Mammary epithelial cell (primary cell): ENCODE measurements at regions of chr20 and their contacts with region 1.

Region 1: GRCh38 chr20:43456809-43457639 is 672 bp upstream of the SRSF6 start:
- DNase-seq: peak; percentile 88
- H3K4me3 ChIP-seq: peak overlapping the region; percentile 68 to 98 (median 71)
- H3K27ac ChIP-seq: peak overlapping the region; percentile 96
- H3K4me1 ChIP-seq: peaks cover 12% of the 10 kb centered on the region
- H3K27me3 ChIP-seq: no peaks in the 10 kb centered on the region
- CTCF ChIP-seq: no peak

Region 2: DNA sequence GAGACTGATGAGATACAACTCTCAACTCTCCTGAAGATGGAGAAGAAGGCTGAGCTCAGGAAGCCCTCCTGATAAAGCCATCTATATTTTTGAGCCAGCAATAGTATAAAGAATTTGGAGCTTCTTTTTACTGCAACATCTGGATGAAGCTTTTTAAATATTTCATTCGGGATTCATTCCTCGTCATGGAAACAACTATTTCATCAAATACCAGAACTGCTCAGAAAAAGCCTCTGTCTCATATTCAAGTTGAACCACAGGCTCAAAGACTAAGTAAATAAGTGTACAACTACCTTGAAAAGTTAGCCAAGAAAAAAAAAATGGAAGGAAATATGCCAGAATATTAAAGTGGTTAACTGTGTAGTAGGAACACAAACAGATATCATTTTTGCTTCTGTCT is 305.1 kb before region 1 on chr20:
- CTCF ChIA-PET with region 1: no interaction called
- dilution Hi-C with region 1: no loop called
- in situ Hi-C with region 1: no loop called
- intact Hi-C with region 1: no loop called
- DNase-seq: no peak
- H3K4me3 ChIP-seq: no peak overlapping the region
- H3K27ac ChIP-seq: no peak overlapping the region
- H3K4me1 ChIP-seq: no peaks in the 10 kb centered on the region
- H3K27me3 ChIP-seq: no peaks in the 10 kb centered on the region
- CTCF ChIP-seq: no peak

Region 3: GRCh38 chr20:43492101-43492500 is 35.1 kb after region 1 on chr20:
- CTCF ChIA-PET with region 1: no interaction called
- dilution Hi-C with region 1: no loop called
- in situ Hi-C with region 1: no loop called
- intact Hi-C with region 1: loop called (anchors 2 kb)
- DNase-seq: peak; percentile 97
- H3K4me3 ChIP-seq: no peak overlapping the region
- H3K27ac ChIP-seq: peak overlapping the region; percentile 10
- H3K4me1 ChIP-seq: peaks cover 4% of the 10 kb centered on the region
- H3K27me3 ChIP-seq: no peaks in the 10 kb centered on the region
- CTCF ChIP-seq: no peak

Region 4: GRCh38 chr20:43590392-43591323 is 133.6 kb after region 1 on chr20 and contains the start of gene IFT52:
- CTCF ChIA-PET with region 1: no interaction called
- dilution Hi-C with region 1: no loop called
- in situ Hi-C with region 1: no loop called
- intact Hi-C with region 1: loop called (anchors 2 kb)
- DNase-seq: peak; percentile 93
- H3K4me3 ChIP-seq: peak within 1 kb of the TSS; percentile 96 to 98 (median 97)
- H3K27ac ChIP-seq: peak within 1 kb of the TSS; percentile 89
- H3K4me1 ChIP-seq: peaks cover 5% of the 10 kb centered on the region
- H3K27me3 ChIP-seq: no peaks in the 10 kb centered on the region
- CTCF ChIP-seq: no peak
- total RNA-seq, gene IFT52: 21.5 to 31.2 TPM

Region 5: DNA sequence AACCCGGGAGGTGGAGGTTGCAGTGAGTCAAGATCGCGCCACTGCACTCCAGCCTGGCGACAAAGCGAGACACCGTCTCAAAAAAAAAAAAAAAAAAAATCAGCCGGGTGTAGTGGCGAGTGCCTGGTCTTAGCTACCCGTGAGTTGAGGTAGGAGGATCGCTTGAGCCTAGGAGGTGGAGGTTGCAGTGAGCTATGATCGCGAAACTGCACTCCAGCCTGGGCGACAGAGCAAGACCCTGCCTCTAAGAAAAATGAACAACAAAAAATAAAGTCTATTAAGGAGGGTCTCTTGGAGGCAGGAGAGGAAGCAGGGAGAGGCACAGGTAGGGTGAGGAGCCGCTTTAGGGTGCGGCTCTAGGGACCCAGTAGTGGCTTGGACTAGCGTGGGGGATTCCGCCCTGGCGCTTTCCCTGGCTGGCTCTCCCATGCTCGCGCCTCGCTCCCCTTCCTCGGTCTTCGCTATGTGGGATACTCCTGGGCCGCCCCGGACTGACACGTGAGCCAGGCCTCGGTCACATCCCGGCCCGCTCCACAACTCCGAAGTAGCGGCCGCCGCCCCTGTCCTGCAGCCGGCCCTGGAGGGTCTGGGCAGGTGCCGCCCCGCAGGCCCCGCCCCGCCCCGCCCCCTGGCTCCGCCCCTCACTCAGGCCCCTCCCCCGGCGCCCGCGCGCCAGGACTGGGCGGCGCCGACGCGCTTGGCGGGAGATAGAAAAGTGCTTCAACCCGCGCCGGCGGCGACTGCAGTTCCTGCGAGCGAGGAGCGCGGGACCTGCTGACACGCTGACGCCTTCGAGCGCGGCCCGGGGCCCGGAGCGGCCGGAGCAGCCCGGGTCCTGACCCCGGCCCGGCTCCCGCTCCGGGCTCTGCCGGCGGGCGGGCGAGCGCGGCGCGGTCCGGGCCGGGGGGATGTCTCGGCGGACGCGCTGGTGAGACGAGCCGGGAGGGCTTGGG is 209.6 kb after region 1 on chr20 and contains the start of gene MYBL2:
- CTCF ChIA-PET with region 1: no interaction called
- dilution Hi-C with region 1: loop called (anchors 5 kb)
- in situ Hi-C with region 1: no loop called
- intact Hi-C with region 1: no loop called
- DNase-seq: peak; percentile 56
- H3K4me3 ChIP-seq: peak within 1 kb of the TSS; percentile 32 to 66 (median 64)
- H3K27ac ChIP-seq: peak within 1 kb of the TSS; percentile 4
- H3K4me1 ChIP-seq: peaks cover 18% of the 10 kb centered on the region
- H3K27me3 ChIP-seq: no peaks in the 10 kb centered on the region
- CTCF ChIP-seq: no peak
- total RNA-seq, gene MYBL2: 1.8 to 33.5 TPM